ENCODE measurements at regions of chr1 and their contacts with region 1.

Region 1: GRCh38 chr1:18581420-18581880 is 49.2 kb upstream of the PAX7 start:
- DNase-seq: no peak
- ATAC-seq: no peak
- H3K4me3 Mint-ChIP-seq: no peak overlapping the region
- H3K27ac Mint-ChIP-seq: no peak overlapping the region
- H3K4me1 Mint-ChIP-seq: no peaks in the 10 kb centered on the region
- H3K27me3 Mint-ChIP-seq: peaks cover 9% of the 10 kb centered on the region
- CTCF ChIP-seq: no peak

Region 2: GRCh38 chr1:17502326-17502778 is 1079.1 kb before region 1 on chr1:
- CTCF ChIA-PET with region 1: no interaction called
- POLR2A ChIA-PET with region 1: no interaction called
- intact Hi-C with region 1: loop called (anchors 5 kb)
- DNase-seq: peak; percentile 50
- ATAC-seq: peak; percentile 70
- H3K4me3 Mint-ChIP-seq: no peak overlapping the region
- H3K27ac Mint-ChIP-seq: no peak overlapping the region
- H3K4me1 Mint-ChIP-seq: no peaks in the 10 kb centered on the region
- H3K27me3 Mint-ChIP-seq: peaks cover 4% of the 10 kb centered on the region
- CTCF ChIP-seq: no peak

Measured in activated B cell treated with CpG ODN at 0.5 μM for 24 hours (primary cell).